Dorsolateral prefrontal cortex (tissue), 120 donors: ENCODE measurements at regions of chr13 and their contacts with region 1.

Region 1: GRCh38 chr13:98672944-98673545 is 79.4 kb downstream of the SLC15A1 start:
- DNase-seq: peak in 7 of 10 donors; percentile 38 to 70 (median 49)
- H3K4me3 ChIP-seq: peak overlapping the region in 26 of 59 donors; percentile 7 to 54 (median 25)
- H3K27ac ChIP-seq: peak overlapping the region in 1 of 59 donors; percentile 2
- H3K27me3 ChIP-seq: peaks cover 0 to 6% (median 0%) of the 10 kb centered on the region in 45 donors
- CTCF ChIP-seq: peak; percentile 70 to 99 (median 91)

Region 2: DNA sequence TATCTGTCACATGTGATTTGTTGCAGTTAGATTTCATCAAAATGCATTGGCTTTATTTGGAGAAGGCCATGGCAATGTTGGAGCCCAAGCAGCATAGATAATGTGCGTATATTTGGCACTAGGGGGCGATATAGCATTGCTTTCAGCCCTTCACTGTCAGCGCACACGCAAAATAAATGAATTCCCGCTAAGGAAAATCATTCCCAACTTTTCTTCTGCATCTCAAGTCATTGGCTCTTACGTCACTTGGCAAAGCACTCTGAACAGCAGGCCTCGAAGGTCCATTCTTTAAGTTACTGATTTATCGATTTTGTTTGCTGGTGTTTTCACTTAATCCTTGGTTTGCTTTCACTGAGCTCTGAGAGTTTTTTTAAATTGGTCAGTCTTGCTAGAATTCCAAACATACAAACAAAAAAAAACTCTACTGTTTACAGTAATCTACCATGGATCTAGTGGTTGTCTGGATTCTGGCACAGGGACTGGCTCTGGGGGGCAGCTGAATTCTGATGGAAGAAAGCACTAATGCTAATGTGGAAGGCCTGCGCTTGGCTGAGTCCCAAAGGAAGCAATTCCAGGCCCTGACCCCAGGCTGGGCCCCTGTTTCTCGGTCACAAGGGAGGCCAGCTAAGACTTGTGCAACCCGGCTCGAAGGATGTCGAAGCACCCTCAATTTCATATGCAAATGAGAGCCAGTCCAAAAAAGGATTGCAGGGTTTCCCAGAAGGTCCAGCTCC is 817.3 kb before region 1 on chr13:
- intact Hi-C with region 1: loop called in 1 of 2 experiments (anchors 5 kb)
- DNase-seq: peak in 5 of 10 donors; percentile 20 to 51 (median 41)
- H3K4me3 ChIP-seq: peak overlapping the region in 9 of 59 donors; percentile 3 to 33 (median 21)
- H3K27ac ChIP-seq: peak overlapping the region in 3 of 59 donors; percentile 24 to 38 (median 29)
- H3K27me3 ChIP-seq: peaks cover 0 to 6% (median 0%) of the 10 kb centered on the region in 45 donors
- CTCF ChIP-seq: peak; percentile 80 to 95 (median 88)

Region 3: DNA sequence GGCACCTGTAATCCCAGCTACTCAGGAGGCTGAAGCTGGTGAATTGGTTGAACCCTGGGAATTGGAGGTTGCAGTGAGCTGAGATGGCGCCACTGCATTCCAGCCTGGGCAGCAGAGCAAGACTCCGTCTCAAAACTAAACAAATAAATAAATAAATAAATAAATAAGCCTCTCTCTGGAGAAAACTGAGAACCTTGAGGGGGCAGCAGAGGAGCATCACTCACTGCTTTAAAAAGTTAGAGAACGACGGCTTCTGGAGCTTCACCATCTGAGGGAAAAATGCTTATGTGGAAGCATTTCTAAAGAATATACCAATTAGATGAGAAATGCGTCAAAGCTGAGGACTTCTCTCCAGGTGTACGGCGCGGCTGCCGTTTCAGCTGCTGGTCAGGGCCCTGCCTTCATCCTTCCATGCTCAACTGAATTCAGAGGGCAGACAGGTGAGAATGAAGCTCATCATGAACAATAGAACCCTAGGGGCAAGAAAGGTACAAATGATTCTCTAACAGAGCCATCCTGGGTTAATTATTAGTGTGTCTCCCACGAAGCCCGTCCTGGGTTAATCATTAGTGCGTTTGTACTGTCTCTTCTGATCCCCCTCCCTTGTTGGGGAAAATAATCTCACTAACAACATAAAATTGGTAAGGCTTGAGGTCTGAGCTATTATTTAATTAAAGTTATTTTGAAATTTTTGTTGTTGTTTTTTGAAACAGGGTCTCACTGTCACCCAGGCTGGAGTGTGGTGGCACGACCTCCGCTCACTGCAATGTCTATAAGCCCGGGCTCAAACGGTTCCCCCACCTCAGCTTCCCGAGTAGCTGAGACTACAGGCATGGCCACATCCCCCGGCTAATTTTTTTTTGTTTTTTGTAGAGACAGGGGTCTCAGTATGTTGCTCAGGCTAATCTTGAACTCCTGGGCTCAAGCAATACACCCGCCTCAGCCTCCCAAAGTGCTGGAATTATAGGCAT is 639.5 kb before region 1 on chr13:
- intact Hi-C with region 1: loop called (anchors 5 to 10 kb)
- DNase-seq: peak in 3 of 10 donors; percentile 10 to 53 (median 22)
- H3K4me3 ChIP-seq: peak overlapping the region in 5 of 59 donors; percentile 11 to 40 (median 19)
- H3K27ac ChIP-seq: no peak overlapping the region
- H3K27me3 ChIP-seq: peaks cover 0 to 44% (median 0%) of the 10 kb centered on the region in 45 donors
- CTCF ChIP-seq: peak in 51 of 56 donors; percentile 15 to 68 (median 46)

Region 4: DNA sequence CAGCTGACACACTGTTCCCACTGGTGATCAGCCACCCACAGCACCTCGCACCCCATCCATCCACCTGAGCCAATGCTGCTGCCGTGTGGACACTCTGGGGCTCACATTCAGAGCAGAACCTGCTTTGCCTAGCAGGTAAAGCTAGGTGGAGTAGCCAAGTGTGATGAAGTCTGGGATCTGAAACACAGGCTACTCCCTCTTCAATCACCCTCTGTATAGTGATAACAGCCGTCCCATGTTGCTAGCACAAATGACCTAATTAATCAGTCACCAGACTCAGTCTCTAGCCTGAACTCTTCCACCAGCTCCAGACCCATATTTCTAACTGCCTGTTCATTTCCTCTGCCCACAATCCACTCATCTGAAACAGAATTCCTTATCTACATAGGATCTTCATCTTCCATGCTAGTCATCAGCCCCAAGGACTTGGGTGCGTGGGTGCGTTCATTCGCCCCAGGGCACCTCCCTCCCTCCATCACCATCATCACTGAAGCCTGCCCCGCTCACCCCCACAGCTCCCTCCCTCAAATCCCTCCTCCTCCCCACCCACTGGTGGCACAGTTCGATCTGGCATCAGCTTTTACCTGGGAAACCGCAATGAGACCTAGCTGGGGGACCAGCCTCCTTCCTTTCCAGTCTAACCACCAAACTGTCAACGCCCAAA is 115.9 kb before region 1 on chr13:
- intact Hi-C with region 1: no loop called
- DNase-seq: no peak
- H3K4me3 ChIP-seq: no peak overlapping the region
- H3K27ac ChIP-seq: no peak overlapping the region
- H3K27me3 ChIP-seq: no peaks in the 10 kb centered on the region
- CTCF ChIP-seq: no peak

Region 5: DNA sequence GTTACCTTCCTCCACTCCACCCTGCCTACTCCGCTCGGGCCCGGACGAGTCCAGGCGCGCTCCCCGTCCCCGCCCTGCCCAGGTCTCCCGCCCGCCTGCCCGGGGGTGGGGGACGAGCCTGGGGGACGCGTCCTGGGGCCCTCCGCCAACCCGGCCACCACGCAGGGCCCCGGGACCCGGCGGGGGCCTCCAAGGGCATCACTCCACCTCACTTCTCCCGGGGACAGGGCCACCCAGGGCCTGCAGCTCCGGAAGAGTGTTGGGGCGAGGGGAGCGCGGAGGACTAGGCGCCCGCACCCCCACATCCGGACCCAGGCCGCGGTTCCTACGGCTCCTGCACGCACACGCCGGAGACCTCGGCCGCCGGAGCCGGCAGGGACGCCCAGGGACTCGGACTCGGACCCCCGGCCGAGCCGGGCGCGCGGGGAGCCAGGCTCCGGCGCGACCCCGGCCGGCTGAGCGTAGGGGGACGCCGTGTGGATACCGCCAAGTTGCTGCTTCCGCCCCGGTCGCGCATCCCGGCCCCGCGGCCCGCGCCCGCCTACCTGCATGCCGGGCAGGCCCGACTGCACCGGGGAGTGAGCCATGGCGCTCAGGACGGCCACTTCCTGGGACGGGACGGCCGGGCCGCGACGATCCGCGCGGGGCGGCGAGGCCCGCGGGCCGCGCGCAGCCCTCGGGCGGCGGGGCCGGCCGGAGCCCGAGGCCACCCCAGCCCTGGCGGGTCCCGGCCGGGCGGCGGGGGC is 96.7 kb before region 1 on chr13:
- intact Hi-C with region 1: no loop called
- DNase-seq: peak in 4 of 10 donors; percentile 23 to 64 (median 50)
- H3K4me3 ChIP-seq: peak overlapping the region; percentile 68 to 97 (median 87)
- H3K27ac ChIP-seq: peak overlapping the region in 56 of 59 donors; percentile 9 to 96 (median 88)
- H3K27me3 ChIP-seq: no peaks in the 10 kb centered on the region
- CTCF ChIP-seq: no peak

Region 6: DNA sequence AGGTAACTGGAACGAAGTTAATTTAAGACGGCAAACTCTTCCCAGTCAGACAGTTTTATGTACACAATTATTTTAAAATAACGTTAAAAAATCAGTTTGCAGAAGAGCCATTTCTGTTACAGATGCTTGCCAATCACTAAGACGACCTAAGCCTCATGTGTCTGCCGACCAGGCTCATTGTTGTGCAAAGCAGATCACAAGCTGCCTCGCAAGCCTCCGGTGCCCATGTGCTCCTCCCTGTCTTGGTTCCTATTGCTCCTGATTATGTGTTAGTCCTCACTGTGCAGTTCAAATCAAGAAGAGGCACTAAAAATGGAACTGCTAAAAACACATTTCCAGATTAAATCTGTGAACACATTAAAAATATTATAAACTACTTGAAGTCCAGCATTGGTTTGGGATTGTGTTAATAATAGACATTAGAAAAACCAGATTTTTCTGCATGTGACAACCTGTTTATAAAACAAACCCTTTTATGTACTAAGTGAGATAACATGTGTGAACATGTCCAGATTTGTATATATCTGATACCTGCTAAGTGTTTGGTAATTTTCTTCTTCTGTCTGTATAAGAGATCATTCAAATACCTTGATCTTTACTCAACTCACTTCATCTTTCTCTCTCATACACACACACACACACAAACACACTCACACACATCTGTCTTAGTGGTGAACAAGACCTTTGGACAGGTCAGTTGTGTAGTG is 161.4 kb after region 1 on chr13:
- intact Hi-C with region 1: no loop called
- DNase-seq: no peak
- H3K4me3 ChIP-seq: no peak overlapping the region
- H3K27ac ChIP-seq: no peak overlapping the region
- H3K27me3 ChIP-seq: no peaks in the 10 kb centered on the region
- CTCF ChIP-seq: no peak

Region 7: DNA sequence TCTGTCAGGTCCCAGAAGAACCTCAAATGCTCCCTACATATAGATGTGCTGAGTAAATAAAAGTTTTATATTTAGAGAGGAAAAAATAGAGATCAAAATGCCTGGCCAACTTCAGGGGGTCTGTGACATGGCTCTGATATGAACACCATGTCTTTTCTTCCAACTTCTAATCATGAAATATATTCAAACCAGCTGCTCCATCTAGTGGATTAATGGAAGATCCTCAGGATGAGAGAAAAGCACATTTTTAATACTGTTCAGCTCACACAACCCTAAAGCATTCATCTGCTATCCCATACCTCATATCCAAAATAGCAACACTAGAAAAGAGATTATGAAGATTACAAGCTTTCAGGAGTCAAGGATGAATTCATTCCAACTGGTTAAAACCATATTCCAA is 360.8 kb after region 1 on chr13:
- intact Hi-C with region 1: loop called in 1 of 2 experiments (anchors 10 kb)
- DNase-seq: no peak
- H3K4me3 ChIP-seq: no peak overlapping the region
- H3K27ac ChIP-seq: peak overlapping the region in 3 of 59 donors; percentile 11 to 55 (median 11)
- H3K27me3 ChIP-seq: no peaks in the 10 kb centered on the region
- CTCF ChIP-seq: peak; percentile 34 to 91 (median 74)